GM12878 (cell line): ENCODE measurements at regions of chr1 and their contacts with region 1.

Region 1: DNA sequence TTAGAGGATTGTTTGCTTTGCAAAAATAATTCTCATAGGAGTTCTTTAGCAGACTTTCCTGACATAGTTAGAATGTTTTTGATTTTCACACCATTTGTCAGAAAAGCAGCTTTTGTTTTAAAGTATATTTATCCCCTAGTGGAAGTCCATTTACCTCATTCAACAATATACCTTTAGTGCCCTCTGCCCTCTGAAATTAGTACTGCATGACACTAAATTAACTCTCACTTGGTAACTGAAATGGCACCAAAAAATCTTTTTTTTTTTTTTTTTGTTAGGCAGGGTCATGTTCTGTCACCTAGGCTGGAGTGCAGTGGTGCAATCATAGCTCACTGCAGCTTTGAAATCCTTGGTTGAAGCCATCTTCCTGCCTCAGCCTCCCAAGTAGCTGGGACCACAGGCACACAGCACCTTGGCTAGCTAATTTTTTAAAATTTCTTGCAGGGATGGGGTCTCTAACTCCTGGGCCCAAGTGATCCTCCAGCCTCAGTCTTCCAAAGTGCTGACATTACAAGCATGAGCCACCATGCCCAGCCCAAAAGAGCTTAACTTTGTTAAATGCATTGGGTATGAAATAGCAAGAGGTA is 13.6 kb downstream of the LRRC42 start:
- DNase-seq: no peak
- ATAC-seq: peak; percentile 81
- H3K4me3 ChIP-seq: no peak overlapping the region
- H3K27ac ChIP-seq: no peak overlapping the region
- H3K4me1 ChIP-seq: peaks cover 11% of the 10 kb centered on the region; the same call in 1 of the 2 replicates
- H3K27me3 ChIP-seq: no peaks in the 10 kb centered on the region
- CTCF ChIP-seq: peak; percentile 42 to 67 (median 57); a peak in 5 of 6 replicates
- EP300 ChIP-seq: no peak
- POLR2A ChIP-seq: no peak
- RAD21 ChIP-seq: peak; percentile 74

Region 2: GRCh38 chr1:53485478-53486394 is 474.0 kb before region 1 on chr1:
- CTCF ChIA-PET with region 1: interaction called, 3 read pairs
- POLR2A ChIA-PET with region 1: no interaction called
- RAD21 ChIA-PET with region 1: no interaction called
- SMC1A ChIA-PET with region 1: no interaction called
- in situ Hi-C with region 1: loop called (anchors 25 kb)
- intact Hi-C with region 1: loop called (anchors 10 kb)
- DNase-seq: no peak
- ATAC-seq: peak; percentile 96
- H3K4me3 ChIP-seq: no peak overlapping the region
- H3K27ac ChIP-seq: no peak overlapping the region
- H3K4me1 ChIP-seq: no peaks in the 10 kb centered on the region
- H3K27me3 ChIP-seq: peaks cover 5 to 7% of the 10 kb centered on the region in 2 experiments; a peak in 3 of 4 replicates
- CTCF ChIP-seq: peak; percentile 81 to 89 (median 85)
- EP300 ChIP-seq: no peak
- POLR2A ChIP-seq: no peak
- RAD21 ChIP-seq: peak; percentile 79

Region 3: DNA sequence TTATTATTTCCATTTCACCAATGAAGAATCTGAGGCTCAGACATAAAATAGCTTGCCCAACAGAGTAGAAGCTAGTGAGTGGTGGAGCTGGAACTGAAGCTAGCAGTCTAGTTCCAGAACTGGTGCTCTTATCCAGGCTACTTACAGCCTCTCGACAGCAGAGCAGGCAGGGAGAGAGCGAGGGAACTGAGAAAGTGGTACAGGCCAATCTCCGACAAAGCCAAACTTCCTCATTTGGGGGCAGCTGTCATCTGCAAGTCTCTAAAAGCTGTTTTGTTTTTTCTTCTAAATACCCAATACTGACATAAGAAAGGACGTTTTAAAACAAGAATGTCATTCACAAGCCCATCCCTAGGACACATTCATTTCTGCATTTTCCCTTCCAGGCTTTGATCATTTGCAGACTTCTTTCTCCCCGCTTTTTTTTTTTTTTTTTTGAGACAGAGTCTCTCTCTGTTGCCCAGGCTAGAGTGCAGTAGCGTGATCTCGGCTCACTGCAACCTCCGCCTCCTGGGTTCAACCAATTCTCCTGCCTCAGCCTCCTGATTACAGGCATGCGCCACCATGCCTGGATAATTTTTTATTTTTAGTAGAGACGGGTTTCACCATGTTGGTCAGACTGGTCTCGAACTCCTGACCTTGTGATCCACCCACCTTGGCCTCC is 90.2 kb before region 1 on chr1:
- CTCF ChIA-PET with region 1: interaction called, 232 read pairs
- POLR2A ChIA-PET with region 1: interaction called, 4 read pairs
- RAD21 ChIA-PET with region 1: interaction called, 9 read pairs
- SMC1A ChIA-PET with region 1: interaction called, 15 read pairs
- in situ Hi-C with region 1: no loop called
- intact Hi-C with region 1: no loop called
- DNase-seq: no peak
- ATAC-seq: peak; percentile 76
- H3K4me3 ChIP-seq: no peak overlapping the region
- H3K27ac ChIP-seq: no peak overlapping the region
- H3K4me1 ChIP-seq: peaks cover 5% of the 10 kb centered on the region
- H3K27me3 ChIP-seq: no peaks in the 10 kb centered on the region
- CTCF ChIP-seq: no peak
- EP300 ChIP-seq: no peak
- POLR2A ChIP-seq: no peak
- RAD21 ChIP-seq: no peak

Region 4: GRCh38 chr1:53878492-53879105 is 81.2 kb before region 1 on chr1:
- CTCF ChIA-PET with region 1: interaction called, 232 read pairs
- POLR2A ChIA-PET with region 1: interaction called, 3 read pairs
- RAD21 ChIA-PET with region 1: interaction called, 33 read pairs
- SMC1A ChIA-PET with region 1: interaction called, 37 read pairs
- in situ Hi-C with region 1: no loop called
- intact Hi-C with region 1: no loop called
- DNase-seq: no peak
- ATAC-seq: peak; percentile 60; the same call in 2 of the 3 replicates
- H3K4me3 ChIP-seq: no peak overlapping the region
- H3K27ac ChIP-seq: no peak overlapping the region
- H3K4me1 ChIP-seq: no peaks in the 10 kb centered on the region
- H3K27me3 ChIP-seq: no peaks in the 10 kb centered on the region
- CTCF ChIP-seq: peak; percentile 48 to 55 (median 54)
- EP300 ChIP-seq: no peak
- POLR2A ChIP-seq: no peak
- RAD21 ChIP-seq: peak; percentile 67

Region 5: GRCh38 chr1:53919675-53920066 is 40.1 kb before region 1 on chr1:
- CTCF ChIA-PET with region 1: interaction called, 13 read pairs
- POLR2A ChIA-PET with region 1: no interaction called
- RAD21 ChIA-PET with region 1: interaction called, 6 read pairs
- SMC1A ChIA-PET with region 1: interaction called, 7 read pairs
- in situ Hi-C with region 1: no loop called
- intact Hi-C with region 1: no loop called
- DNase-seq: no peak
- ATAC-seq: no peak
- H3K4me3 ChIP-seq: no peak overlapping the region
- H3K27ac ChIP-seq: no peak overlapping the region
- H3K4me1 ChIP-seq: no peaks in the 10 kb centered on the region
- H3K27me3 ChIP-seq: no peaks in the 10 kb centered on the region
- CTCF ChIP-seq: no peak
- EP300 ChIP-seq: no peak
- POLR2A ChIP-seq: no peak
- RAD21 ChIP-seq: no peak

Region 6: GRCh38 chr1:53971718-53972117 is 12.0 kb after region 1 on chr1:
- CTCF ChIA-PET with region 1: interaction called, 20 read pairs
- POLR2A ChIA-PET with region 1: no interaction called
- RAD21 ChIA-PET with region 1: interaction called, 5 read pairs
- SMC1A ChIA-PET with region 1: interaction called, 5 read pairs
- in situ Hi-C with region 1: no loop called
- intact Hi-C with region 1: no loop called
- DNase-seq: no peak
- ATAC-seq: no peak
- H3K4me3 ChIP-seq: no peak overlapping the region
- H3K27ac ChIP-seq: no peak overlapping the region
- H3K4me1 ChIP-seq: no peaks in the 10 kb centered on the region
- H3K27me3 ChIP-seq: no peaks in the 10 kb centered on the region
- CTCF ChIP-seq: no peak
- EP300 ChIP-seq: no peak
- POLR2A ChIP-seq: no peak
- RAD21 ChIP-seq: no peak

Region 7: GRCh38 chr1:54014009-54014629 is 54.4 kb after region 1 on chr1:
- CTCF ChIA-PET with region 1: no interaction called
- POLR2A ChIA-PET with region 1: no interaction called
- RAD21 ChIA-PET with region 1: no interaction called
- SMC1A ChIA-PET with region 1: no interaction called
- in situ Hi-C with region 1: loop called (anchors 5 kb)
- intact Hi-C with region 1: no loop called
- DNase-seq: no peak
- ATAC-seq: no peak
- H3K4me3 ChIP-seq: no peak overlapping the region
- H3K27ac ChIP-seq: no peak overlapping the region
- H3K4me1 ChIP-seq: no peaks in the 10 kb centered on the region
- H3K27me3 ChIP-seq: no peaks in the 10 kb centered on the region; a peak in 2 of 4 replicates
- CTCF ChIP-seq: no peak
- EP300 ChIP-seq: no peak
- POLR2A ChIP-seq: no peak
- RAD21 ChIP-seq: no peak